ENCODE measurements at regions of chr6 and their contacts with region 1.

Region 1: DNA sequence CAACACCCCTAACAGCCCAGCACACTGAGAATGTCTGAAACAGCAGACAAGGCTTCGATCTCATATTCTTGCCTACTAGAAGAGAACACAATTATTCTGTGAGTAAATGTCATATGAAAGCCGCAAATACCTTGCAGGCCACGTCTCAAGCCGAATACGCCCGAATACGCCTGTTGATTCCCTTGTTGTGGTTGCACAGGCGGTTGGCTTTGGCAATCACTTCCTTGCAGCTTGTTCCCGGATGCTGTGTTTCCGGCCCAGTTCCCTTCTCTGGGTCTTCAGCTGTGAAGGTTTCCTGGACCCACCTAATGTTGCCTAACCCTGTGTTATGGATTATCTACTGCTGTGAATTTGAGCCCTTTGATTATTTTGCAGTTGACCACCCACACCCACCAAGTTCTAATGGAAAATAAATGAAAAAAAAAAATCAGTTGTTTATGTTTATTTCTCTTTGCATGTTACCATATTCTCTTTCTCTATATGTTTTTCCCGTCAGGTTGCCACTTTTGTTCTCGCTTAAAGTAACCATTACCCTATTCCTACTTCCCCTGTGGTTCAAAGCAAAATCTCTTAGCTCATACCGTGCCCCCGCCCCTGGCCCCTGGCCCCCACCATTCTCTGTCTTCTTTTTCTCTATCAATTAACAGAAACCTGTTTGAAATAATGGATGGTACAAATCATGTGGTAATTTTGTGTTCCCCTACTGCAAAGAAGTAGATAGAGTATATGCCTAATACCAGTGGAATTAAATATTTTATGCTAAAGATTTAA is 172.4 kb downstream of the ADGB start:
- DNase-seq: peak; percentile 30 to 70 (median 41)
- ATAC-seq: peak; percentile 82
- H3K4me3 ChIP-seq: peak overlapping the region; percentile 2; the same call in 1 of the 2 replicates
- H3K27ac ChIP-seq: peak overlapping the region; percentile 55; the same call in 2 of the 3 replicates
- H3K4me1 ChIP-seq: peaks cover 3 to 5% of the 10 kb centered on the region in 2 experiments; a peak in 3 of 5 replicates
- H3K27me3 ChIP-seq: no peaks in the 10 kb centered on the region
- CTCF ChIP-seq: no peak
- EP300 ChIP-seq: peak; percentile 77
- POLR2A ChIP-seq: no peak
- RAD21 ChIP-seq: no peak

Region 2: GRCh38 chr6:145929037-145929633 is 842.0 kb before region 1 on chr6:
- CTCF ChIA-PET with region 1: interaction called, 3 read pairs
- POLR2A ChIA-PET with region 1: no interaction called
- in situ Hi-C with region 1: no loop called
- intact Hi-C with region 1: loop called (anchors 10 kb)
- DNase-seq: peak; percentile 24 to 64 (median 30)
- ATAC-seq: peak; percentile 66
- H3K4me3 ChIP-seq: no peak overlapping the region
- H3K27ac ChIP-seq: no peak overlapping the region
- H3K4me1 ChIP-seq: no peaks in the 10 kb centered on the region
- H3K27me3 ChIP-seq: no peaks in the 10 kb centered on the region
- CTCF ChIP-seq: peak; percentile 43 to 77 (median 60); a peak in 4 of 6 replicates
- EP300 ChIP-seq: 0 out of 2 replicates have a peak, but pooled peaks have one; percentile 5
- POLR2A ChIP-seq: no peak
- RAD21 ChIP-seq: peak; percentile 70 to 72

Region 3: GRCh38 chr6:146041282-146041681 is 729.9 kb before region 1 on chr6:
- CTCF ChIA-PET with region 1: no interaction called
- POLR2A ChIA-PET with region 1: no interaction called
- in situ Hi-C with region 1: no loop called
- intact Hi-C with region 1: loop called (anchors 10 kb)
- DNase-seq: peak in 1 of 4 experiments; percentile 34
- ATAC-seq: peak; percentile 76
- H3K4me3 ChIP-seq: no peak overlapping the region
- H3K27ac ChIP-seq: no peak overlapping the region
- H3K4me1 ChIP-seq: no peaks in the 10 kb centered on the region
- H3K27me3 ChIP-seq: no peaks in the 10 kb centered on the region
- CTCF ChIP-seq: peak; percentile 34 to 53 (median 44); a peak in 5 of 6 replicates
- EP300 ChIP-seq: no peak
- POLR2A ChIP-seq: no peak
- RAD21 ChIP-seq: peak; percentile 69 to 73

Region 4: DNA sequence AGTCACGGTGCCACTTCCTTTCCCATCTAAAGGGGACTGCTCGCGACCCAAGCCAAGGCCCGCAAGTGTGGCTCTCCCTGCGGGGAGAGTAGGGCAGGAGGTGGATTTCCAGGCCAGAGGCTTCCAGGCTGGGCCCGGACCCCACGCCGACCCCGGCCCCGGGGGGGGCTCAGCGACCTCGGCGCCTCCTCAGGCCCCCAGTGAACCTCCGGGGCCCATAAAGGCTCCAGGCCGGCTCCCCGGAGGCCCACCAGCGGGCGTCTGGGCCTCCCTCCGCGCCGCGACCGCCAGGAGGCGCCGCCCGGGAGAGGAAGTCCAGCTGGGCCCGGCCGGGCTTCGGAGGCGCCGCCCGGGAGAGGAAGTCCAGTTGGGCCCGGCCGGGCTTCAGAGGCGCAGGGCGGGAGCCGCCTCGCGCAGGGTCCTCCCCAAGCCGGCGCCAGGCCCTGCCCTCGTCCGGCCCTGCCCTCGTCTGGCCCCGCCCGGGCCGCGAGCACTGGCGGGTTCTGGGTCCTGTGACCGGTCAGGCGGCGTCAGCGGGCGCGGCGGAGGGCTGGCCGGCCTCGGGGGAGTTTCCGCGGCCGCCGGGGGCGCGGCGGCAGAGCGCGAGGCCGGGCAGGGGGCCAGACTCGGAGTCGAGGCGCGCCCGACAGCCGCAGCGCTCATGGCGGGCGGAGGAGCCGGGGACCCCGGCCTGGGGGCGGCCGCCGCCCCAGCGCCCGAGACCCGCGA is 227.8 kb before region 1 on chr6 and contains the start of gene RAB32:
- CTCF ChIA-PET with region 1: no interaction called
- POLR2A ChIA-PET with region 1: no interaction called
- in situ Hi-C with region 1: no loop called
- intact Hi-C with region 1: loop called (anchors 10 kb)
- DNase-seq: peak; percentile 88 to 90 (median 88)
- ATAC-seq: peak; percentile 99
- H3K4me3 ChIP-seq: peak within 1 kb of the TSS; percentile 47
- H3K27ac ChIP-seq: peak within 1 kb of the TSS; percentile 58; the same call in 1 of the 3 replicates
- H3K4me1 ChIP-seq: peaks cover 2 to 16% of the 10 kb centered on the region in 2 experiments
- H3K27me3 ChIP-seq: no peaks in the 10 kb centered on the region
- CTCF ChIP-seq: peak; percentile 71 to 95 (median 86)
- EP300 ChIP-seq: no peak
- POLR2A ChIP-seq: peak; percentile 53
- RAD21 ChIP-seq: peak; percentile 87
- polyA plus RNA-seq, gene RAB32: 2.5 to 3.8 TPM

Region 5: GRCh38 chr6:146700078-146700686 is 71.0 kb before region 1 on chr6:
- CTCF ChIA-PET with region 1: no interaction called
- POLR2A ChIA-PET with region 1: no interaction called
- in situ Hi-C with region 1: no loop called
- intact Hi-C with region 1: loop called (anchors 5 kb)
- DNase-seq: peak; percentile 70 to 90 (median 76)
- ATAC-seq: peak; percentile 91
- H3K4me3 ChIP-seq: no peak overlapping the region
- H3K27ac ChIP-seq: no peak overlapping the region
- H3K4me1 ChIP-seq: no peaks in the 10 kb centered on the region
- H3K27me3 ChIP-seq: no peaks in the 10 kb centered on the region
- CTCF ChIP-seq: peak; percentile 69 to 92 (median 82)
- EP300 ChIP-seq: no peak
- POLR2A ChIP-seq: no peak
- RAD21 ChIP-seq: peak; percentile 98

Measured in K562 (cell line).